Breast epithelium (tissue), 4 donors: ENCODE measurements at regions of chrX and their contacts with region 1.

Region 1: GRCh38 chrX:112058255-112058654 is 24.3 kb downstream of the TRPC5 start:
- DNase-seq: no peak
- H3K4me3 ChIP-seq: no peak overlapping the region
- H3K27ac ChIP-seq: no peak overlapping the region
- H3K4me1 ChIP-seq: no peaks in the 10 kb centered on the region
- H3K27me3 ChIP-seq: peaks cover 0 to 54% of the 10 kb centered on the region in 2 donors
- CTCF ChIP-seq: no peak
- POLR2A ChIP-seq: no peak

Region 2: DNA sequence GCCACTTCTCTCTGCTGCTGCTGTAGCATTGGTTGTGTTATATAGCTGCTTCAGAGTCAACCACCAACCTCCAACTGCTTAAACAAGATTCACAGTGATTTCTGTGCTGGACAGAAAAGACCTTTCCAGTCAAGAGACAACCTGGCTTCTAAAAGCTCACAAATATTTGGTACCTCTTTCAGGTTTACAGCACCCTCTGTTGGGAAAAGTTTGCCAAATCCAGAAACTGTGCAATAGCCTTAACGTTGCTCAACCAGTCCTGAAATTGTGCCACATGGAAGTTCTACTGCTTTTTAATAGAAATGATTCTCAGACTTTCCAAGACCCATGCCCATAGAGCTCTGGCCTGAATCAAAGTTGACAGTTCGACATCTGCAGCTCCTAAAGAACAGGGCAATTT is 1683.5 kb after region 1 on chrX:
- intact Hi-C with region 1: loop called (anchors 10 kb)
- DNase-seq: no peak
- H3K4me3 ChIP-seq: no peak overlapping the region
- H3K27ac ChIP-seq: no peak overlapping the region
- H3K4me1 ChIP-seq: no peaks in the 10 kb centered on the region
- H3K27me3 ChIP-seq: peaks cover 0 to 23% of the 10 kb centered on the region in 2 donors
- CTCF ChIP-seq: no peak
- POLR2A ChIP-seq: no peak